ENCODE measurements at regions of chr4 and their contacts with region 1.

Region 1: GRCh38 chr4:87375719-87376291 is 15.2 kb downstream of the HSD17B11 start:
- DNase-seq: peak; percentile 67
- H3K4me3 ChIP-seq: no peak overlapping the region
- H3K27ac ChIP-seq: no peak overlapping the region
- H3K4me1 ChIP-seq: no peaks in the 10 kb centered on the region
- H3K27me3 ChIP-seq: no peaks in the 10 kb centered on the region
- CTCF ChIP-seq: peak; percentile 63 to 66
- POLR2A ChIP-seq: no peak

Region 2: DNA sequence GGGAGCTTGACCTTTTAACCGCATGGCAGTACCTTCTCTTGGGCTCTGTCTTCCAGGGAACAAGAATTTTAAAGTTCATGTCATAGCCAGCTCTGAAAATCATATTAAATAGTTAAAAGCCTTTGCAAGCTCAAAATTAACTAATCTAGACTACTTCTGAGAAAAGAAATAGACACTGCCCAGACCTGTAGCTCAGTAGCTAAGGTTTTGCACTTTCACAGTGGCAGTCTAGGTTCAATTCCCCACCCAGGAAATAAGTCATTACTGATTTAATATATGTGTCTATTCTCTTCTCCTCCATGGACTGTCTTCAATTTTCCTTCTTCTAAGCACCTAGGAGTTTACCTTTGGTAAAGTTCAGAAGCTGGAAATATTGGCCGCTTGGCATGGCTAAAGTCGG is 12.2 kb before region 1 on chr4:
- CTCF ChIA-PET with region 1: interaction called, 21 read pairs
- POLR2A ChIA-PET with region 1: no interaction called
- dilution Hi-C with region 1: no loop called
- intact Hi-C with region 1: no loop called
- DNase-seq: no peak
- H3K4me3 ChIP-seq: no peak overlapping the region
- H3K27ac ChIP-seq: no peak overlapping the region
- H3K4me1 ChIP-seq: no peaks in the 10 kb centered on the region
- H3K27me3 ChIP-seq: no peaks in the 10 kb centered on the region
- CTCF ChIP-seq: no peak
- POLR2A ChIP-seq: no peak

Region 3: DNA sequence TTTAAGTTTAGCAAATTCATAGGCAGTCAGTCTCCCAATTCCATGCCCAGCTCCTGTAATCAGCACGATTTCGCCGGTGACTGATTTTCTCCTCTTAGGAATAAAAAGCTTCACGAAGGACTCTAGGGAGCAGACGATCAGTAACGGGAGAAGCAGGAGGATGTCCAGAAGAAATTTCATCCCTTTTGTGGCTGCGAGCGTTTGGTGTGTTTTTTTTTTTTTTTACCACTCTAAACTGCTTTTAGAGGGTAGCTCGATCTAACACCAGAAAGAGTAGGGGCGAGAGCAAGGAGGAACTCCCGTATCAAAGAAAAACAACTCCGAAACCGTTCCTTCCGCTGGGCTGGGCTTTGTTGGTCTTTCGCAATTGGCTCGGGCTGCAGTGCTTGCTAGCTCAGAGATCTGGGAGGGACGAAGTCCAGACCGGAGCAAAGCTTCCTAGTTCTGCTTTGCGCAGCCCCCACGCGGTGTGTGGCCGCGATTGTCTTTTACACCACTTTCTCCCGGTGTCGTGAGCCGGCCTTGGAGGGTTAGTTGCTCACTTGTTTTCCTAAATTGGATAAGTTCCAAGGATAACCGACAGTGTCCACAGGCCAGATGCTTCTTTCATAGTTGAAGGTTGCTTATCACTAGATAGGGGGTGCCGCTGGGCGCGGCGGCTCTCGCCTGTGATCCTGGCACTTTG is 15.2 kb after region 1 on chr4 and contains the start of gene HSD17B11:
- CTCF ChIA-PET with region 1: interaction called, 32 read pairs
- POLR2A ChIA-PET with region 1: interaction called, 5 read pairs
- dilution Hi-C with region 1: no loop called
- intact Hi-C with region 1: no loop called
- DNase-seq: peak; percentile 93
- H3K4me3 ChIP-seq: peak within 1 kb of the TSS; percentile 62 to 85 (median 65)
- H3K27ac ChIP-seq: peak within 1 kb of the TSS; percentile 47
- H3K4me1 ChIP-seq: peaks cover 9% of the 10 kb centered on the region
- H3K27me3 ChIP-seq: no peaks in the 10 kb centered on the region
- CTCF ChIP-seq: no peak
- POLR2A ChIP-seq: peak; percentile 85
- total RNA-seq, gene HSD17B11: 16.0 and 21.1 TPM in 2 replicates

Region 4: GRCh38 chr4:87422104-87423052 is 46.6 kb after region 1 on chr4 and contains the start of gene NUDT9:
- CTCF ChIA-PET with region 1: interaction called, 8 read pairs
- POLR2A ChIA-PET with region 1: no interaction called
- dilution Hi-C with region 1: no loop called
- intact Hi-C with region 1: loop called (anchors 1 kb)
- DNase-seq: peak; percentile 97
- H3K4me3 ChIP-seq: peak within 1 kb of the TSS; percentile 83 to 94 (median 90)
- H3K27ac ChIP-seq: peak within 1 kb of the TSS; percentile 68
- H3K4me1 ChIP-seq: peaks cover 11% of the 10 kb centered on the region
- H3K27me3 ChIP-seq: no peaks in the 10 kb centered on the region
- CTCF ChIP-seq: no peak
- POLR2A ChIP-seq: peak; percentile 79
- total RNA-seq, gene NUDT9: 25.0 and 26.0 TPM in 2 replicates

Region 5: DNA sequence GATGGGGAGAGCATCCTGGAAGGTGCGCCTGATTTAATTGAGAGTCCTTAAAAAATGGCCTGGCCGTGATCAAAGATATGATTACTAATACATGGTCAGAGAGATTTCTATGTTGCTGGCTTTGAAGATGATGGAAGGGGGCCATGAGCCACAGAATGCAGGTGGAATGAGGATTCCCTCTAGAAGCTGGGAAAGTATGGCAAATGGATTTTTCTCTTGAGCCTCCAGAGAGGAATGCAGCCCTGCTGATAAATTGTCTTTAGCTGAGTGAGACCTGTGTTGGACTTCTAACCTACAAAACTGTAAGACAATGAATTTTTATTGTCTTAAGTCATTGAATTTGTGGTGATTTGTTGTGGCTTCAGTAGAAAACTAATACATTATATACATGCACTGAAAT is 54.2 kb after region 1 on chr4:
- CTCF ChIA-PET with region 1: interaction called, 11 read pairs
- POLR2A ChIA-PET with region 1: no interaction called
- dilution Hi-C with region 1: no loop called
- intact Hi-C with region 1: no loop called
- DNase-seq: no peak
- H3K4me3 ChIP-seq: no peak overlapping the region
- H3K27ac ChIP-seq: no peak overlapping the region
- H3K4me1 ChIP-seq: no peaks in the 10 kb centered on the region
- H3K27me3 ChIP-seq: no peaks in the 10 kb centered on the region
- CTCF ChIP-seq: no peak
- POLR2A ChIP-seq: no peak

Region 6: DNA sequence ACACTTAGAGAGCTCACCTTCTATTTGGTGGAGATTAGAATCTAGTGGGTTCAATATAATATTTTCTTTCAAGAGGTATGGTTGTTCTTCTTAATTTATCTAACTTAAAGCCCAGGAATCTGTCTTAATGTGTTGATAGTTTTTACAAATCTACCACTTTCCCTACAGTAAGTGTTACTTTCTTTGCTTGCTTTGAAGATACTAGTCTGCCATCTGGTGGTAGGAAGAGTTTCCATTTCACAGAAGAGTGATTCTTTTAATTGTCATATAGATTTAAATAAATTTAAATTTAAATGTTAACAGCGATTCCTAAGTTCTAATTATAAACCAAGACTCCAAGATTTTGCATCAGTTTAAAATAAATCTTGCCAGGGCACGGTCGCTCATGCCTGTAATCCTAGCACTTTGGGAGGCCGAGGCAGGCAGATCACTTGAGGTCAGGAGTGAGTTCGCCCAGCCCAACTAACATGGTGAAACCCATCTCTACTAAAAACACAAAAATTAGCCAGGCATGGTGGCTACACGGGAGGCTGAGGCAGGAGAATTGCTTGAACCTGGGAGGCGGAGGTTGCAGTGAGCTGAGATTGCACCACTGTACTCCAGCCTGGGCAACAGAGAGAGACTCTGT is 90.0 kb after region 1 on chr4:
- CTCF ChIA-PET with region 1: interaction called, 165 read pairs
- POLR2A ChIA-PET with region 1: no interaction called
- dilution Hi-C with region 1: no loop called
- intact Hi-C with region 1: loop called (anchors 1 kb)
- DNase-seq: peak; percentile 53
- H3K4me3 ChIP-seq: no peak overlapping the region
- H3K27ac ChIP-seq: no peak overlapping the region
- H3K4me1 ChIP-seq: no peaks in the 10 kb centered on the region
- H3K27me3 ChIP-seq: no peaks in the 10 kb centered on the region
- CTCF ChIP-seq: peak; percentile 18 to 30
- POLR2A ChIP-seq: no peak

Measured in endothelial cell of umbilical vein (primary cell).